ENCODE measurements at regions of chr7 and their contacts with region 1.

Region 1: DNA sequence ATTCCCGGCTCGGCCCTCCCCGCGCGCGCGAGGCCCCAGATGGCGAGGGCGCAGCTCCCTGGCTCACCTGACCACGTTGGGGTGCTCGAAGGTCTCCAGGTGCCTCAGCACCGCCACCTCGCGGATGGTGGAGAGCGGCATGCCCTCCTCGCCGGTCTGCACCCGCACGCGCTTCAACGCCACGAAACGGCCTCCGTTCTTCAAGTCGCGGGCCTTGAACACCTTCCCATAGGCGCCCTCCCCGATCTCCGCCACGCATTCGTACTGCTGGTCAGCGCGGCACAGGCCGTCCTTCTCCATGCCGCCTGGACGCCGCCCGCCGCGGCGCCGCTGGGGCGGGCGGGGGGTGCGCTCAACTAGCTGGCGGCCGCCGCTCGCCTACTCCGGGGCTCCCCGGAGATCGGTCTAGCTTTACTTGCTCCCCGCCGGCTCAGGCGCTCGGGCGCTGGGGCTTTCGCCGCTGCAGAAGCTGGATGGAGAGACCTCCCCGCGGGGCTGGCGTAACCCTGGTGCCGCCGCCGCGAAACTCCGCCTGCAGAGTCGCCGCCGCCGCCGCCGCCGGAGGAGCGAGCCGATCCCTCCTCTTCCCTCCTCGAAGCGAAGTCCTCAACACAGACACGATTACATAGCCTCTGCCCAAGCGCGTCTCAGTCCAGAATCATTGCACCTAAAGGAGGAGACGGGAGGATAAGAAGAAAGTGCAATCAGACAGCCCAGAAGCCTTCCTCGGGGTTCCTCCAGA is 3.2 kb downstream of the CDK6 start:
- DNase-seq: peak; percentile 81
- ATAC-seq: peak; percentile 65
- H3K4me3 Mint-ChIP-seq: peak overlapping the region; percentile 87
- H3K27ac Mint-ChIP-seq: peak overlapping the region; percentile 79
- H3K4me1 Mint-ChIP-seq: peaks cover 42% of the 10 kb centered on the region
- H3K27me3 Mint-ChIP-seq: no peaks in the 10 kb centered on the region
- CTCF ChIP-seq: no peak

Region 2: GRCh38 chr7:92245487-92246362 is 587.5 kb before region 1 on chr7 and contains the starts of genes ANKIB1 and KRIT1:
- CTCF ChIA-PET with region 1: no interaction called
- POLR2A ChIA-PET with region 1: no interaction called
- intact Hi-C with region 1: loop called (anchors 10 kb)
- DNase-seq: peak; percentile 79
- ATAC-seq: peak; percentile 84
- H3K4me3 Mint-ChIP-seq: peak within 1 kb of the TSS; percentile 100
- H3K27ac Mint-ChIP-seq: peak within 1 kb of the TSS; percentile 99
- H3K4me1 Mint-ChIP-seq: peaks cover 40% of the 10 kb centered on the region
- H3K27me3 Mint-ChIP-seq: no peaks in the 10 kb centered on the region
- CTCF ChIP-seq: no peak
- total RNA-seq, gene ANKIB1: 42.5 and 50.6 TPM in 2 replicates
- total RNA-seq, gene KRIT1: 53.4 and 61.1 TPM in 2 replicates

Region 3: DNA sequence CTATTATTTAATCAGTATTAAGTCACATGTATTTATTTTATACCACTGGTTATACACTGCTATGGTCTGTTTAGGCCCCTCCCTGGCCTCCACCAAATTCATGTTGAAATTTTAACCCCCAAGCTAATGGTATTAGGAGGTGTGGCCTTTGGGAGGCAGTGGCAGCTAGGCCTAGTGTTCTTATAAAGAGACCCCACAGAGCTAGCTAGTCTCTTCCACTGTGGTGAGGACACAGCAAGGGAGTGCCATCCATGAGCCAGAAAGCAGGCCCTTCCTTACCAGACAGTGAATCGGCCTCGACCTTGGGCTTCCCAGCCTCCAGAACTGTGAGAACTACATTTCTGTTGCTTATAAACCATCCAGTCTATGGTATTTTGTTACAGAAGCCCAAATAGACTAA is 275.9 kb before region 1 on chr7:
- CTCF ChIA-PET with region 1: no interaction called
- POLR2A ChIA-PET with region 1: no interaction called
- intact Hi-C with region 1: no loop called
- DNase-seq: no peak
- ATAC-seq: no peak
- H3K4me3 Mint-ChIP-seq: no peak overlapping the region
- H3K27ac Mint-ChIP-seq: no peak overlapping the region
- H3K4me1 Mint-ChIP-seq: no peaks in the 10 kb centered on the region
- H3K27me3 Mint-ChIP-seq: no peaks in the 10 kb centered on the region
- CTCF ChIP-seq: no peak

Region 4: DNA sequence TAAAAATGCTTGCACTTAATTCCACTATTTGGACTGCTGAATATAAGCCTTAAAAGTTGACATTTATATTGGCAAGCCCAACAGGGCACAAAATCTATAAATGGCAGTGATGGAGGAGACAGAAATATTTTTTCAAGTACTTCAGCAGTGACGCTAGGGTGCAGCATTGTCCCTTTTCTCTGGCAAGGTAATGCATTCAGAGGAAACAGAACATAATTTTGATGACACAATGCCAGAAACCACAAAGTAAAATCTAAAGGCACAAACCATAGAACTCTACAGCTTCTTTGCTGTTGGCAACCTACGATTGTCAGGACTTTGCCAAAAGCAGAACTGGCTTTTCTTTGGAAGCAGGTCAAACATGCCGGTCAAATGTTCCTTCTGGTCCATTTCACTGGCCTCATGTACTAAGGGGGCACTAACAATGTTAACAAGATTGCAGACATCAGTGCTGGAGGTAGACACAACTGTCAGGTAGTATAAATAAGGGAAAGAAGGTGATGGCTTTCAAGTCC is 212.1 kb before region 1 on chr7:
- CTCF ChIA-PET with region 1: interaction called, 31 read pairs
- POLR2A ChIA-PET with region 1: interaction called, 10 read pairs
- intact Hi-C with region 1: loop called (anchors 1 kb)
- DNase-seq: no peak
- ATAC-seq: peak; percentile 78
- H3K4me3 Mint-ChIP-seq: peak overlapping the region; percentile 17
- H3K27ac Mint-ChIP-seq: peak overlapping the region; percentile 76
- H3K4me1 Mint-ChIP-seq: peaks cover 22% of the 10 kb centered on the region
- H3K27me3 Mint-ChIP-seq: no peaks in the 10 kb centered on the region
- CTCF ChIP-seq: no peak

Region 5: DNA sequence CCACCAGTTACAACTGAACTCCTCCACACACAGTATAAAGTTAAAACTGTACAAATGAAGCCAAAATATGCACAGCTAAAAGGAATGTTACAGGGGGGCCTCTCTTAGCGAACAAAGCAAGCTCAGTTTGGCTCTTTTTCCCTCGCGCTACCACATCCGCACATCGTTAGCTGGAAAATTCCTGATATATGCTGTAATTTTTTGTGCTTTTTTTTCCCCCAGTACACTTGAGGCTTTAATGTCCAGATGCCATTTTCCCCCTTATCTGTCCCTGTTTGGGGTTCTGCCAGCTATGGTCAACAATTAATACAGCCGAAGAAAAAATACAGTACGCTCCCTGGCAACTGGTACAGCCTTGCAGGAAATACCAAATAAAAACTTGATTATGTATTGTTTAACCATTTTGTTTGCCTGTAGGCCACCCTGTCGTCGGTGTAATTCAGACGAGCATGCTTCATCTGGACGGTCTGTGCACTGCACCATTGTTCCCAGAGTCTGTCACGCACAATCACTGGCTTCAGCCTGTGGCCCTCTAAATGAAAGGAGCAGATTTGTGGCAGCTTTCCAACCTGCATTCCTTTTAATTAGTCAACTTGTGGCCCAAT is 134.9 kb before region 1 on chr7:
- CTCF ChIA-PET with region 1: interaction called, 13 read pairs
- POLR2A ChIA-PET with region 1: no interaction called
- intact Hi-C with region 1: no loop called
- DNase-seq: no peak
- ATAC-seq: no peak
- H3K4me3 Mint-ChIP-seq: no peak overlapping the region
- H3K27ac Mint-ChIP-seq: no peak overlapping the region
- H3K4me1 Mint-ChIP-seq: peaks cover 7% of the 10 kb centered on the region
- H3K27me3 Mint-ChIP-seq: no peaks in the 10 kb centered on the region
- CTCF ChIP-seq: no peak

Region 6: DNA sequence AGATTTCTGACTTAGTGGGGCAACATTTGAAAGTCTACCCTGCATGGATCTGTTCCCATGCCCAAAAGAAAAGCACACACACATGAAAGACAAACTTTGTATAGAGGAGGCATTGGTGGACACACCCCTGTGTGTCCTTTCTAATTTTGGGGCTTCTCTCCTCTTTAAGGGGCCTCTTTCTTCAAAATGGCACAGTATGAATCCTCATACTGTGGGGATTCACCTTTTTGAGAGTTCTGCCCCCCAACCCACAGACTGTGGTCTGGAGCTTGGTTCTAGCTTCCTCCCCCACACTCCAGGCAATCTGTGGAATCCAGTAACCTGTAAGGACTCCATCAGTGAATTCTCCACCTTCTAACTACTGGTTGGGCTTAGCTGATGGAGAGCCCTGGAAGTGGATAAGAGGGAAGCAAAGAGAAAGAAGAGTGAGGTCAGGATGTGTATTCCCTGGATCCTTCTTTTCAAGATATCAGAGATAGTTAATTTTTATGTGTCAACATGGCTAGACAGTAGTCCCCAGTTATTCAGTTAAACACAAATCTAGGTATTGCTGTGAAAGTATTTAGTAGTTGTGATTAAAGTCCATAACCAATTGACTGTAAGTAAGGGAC is 35.6 kb after region 1 on chr7:
- CTCF ChIA-PET with region 1: no interaction called
- POLR2A ChIA-PET with region 1: no interaction called
- intact Hi-C with region 1: loop called (anchors 1 kb)
- DNase-seq: no peak
- ATAC-seq: no peak
- H3K4me3 Mint-ChIP-seq: no peak overlapping the region
- H3K27ac Mint-ChIP-seq: no peak overlapping the region
- H3K4me1 Mint-ChIP-seq: no peaks in the 10 kb centered on the region
- H3K27me3 Mint-ChIP-seq: peaks cover 1% of the 10 kb centered on the region
- CTCF ChIP-seq: no peak

Region 7: GRCh38 chr7:93117852-93118530 is 284.8 kb after region 1 on chr7 and contains the start of gene SAMD9:
- CTCF ChIA-PET with region 1: no interaction called
- POLR2A ChIA-PET with region 1: no interaction called
- intact Hi-C with region 1: loop called (anchors 5 kb)
- DNase-seq: no peak
- ATAC-seq: peak; percentile 99
- H3K4me3 Mint-ChIP-seq: peak within 1 kb of the TSS; percentile 79
- H3K27ac Mint-ChIP-seq: peak within 1 kb of the TSS; percentile 74
- H3K4me1 Mint-ChIP-seq: peaks cover 46% of the 10 kb centered on the region
- H3K27me3 Mint-ChIP-seq: no peaks in the 10 kb centered on the region
- CTCF ChIP-seq: no peak
- total RNA-seq, gene SAMD9: 24.4 and 26.3 TPM in 2 replicates

Measured in activated B cell treated with CpG ODN at 0.5 μM for 24 hours (primary cell).